ENCODE measurements at regions of chr11 and their contacts with region 1.

Region 1: GRCh38 chr11:2725368-2726300 is 25.8 kb upstream of the KCNQ1OT1 start:
- DNase-seq: peak; percentile 79
- ATAC-seq: peak; percentile 12
- H3K4me3 ChIP-seq: peak overlapping the region; percentile 27 to 60 (median 30); a peak in 5 of 6 replicates
- H3K27ac ChIP-seq: peak overlapping the region; percentile 64
- H3K4me1 ChIP-seq: peaks cover 93% of the 10 kb centered on the region
- H3K27me3 ChIP-seq: peaks cover 2 to 16% of the 10 kb centered on the region in 2 experiments; a peak in 3 of 5 replicates
- CTCF ChIP-seq: no peak
- EP300 ChIP-seq: no peak
- POLR2A ChIP-seq: peak in 1 of 2 experiments; percentile 38; a peak in 2 of 4 replicates
- RAD21 ChIP-seq: no peak

Region 2: DNA sequence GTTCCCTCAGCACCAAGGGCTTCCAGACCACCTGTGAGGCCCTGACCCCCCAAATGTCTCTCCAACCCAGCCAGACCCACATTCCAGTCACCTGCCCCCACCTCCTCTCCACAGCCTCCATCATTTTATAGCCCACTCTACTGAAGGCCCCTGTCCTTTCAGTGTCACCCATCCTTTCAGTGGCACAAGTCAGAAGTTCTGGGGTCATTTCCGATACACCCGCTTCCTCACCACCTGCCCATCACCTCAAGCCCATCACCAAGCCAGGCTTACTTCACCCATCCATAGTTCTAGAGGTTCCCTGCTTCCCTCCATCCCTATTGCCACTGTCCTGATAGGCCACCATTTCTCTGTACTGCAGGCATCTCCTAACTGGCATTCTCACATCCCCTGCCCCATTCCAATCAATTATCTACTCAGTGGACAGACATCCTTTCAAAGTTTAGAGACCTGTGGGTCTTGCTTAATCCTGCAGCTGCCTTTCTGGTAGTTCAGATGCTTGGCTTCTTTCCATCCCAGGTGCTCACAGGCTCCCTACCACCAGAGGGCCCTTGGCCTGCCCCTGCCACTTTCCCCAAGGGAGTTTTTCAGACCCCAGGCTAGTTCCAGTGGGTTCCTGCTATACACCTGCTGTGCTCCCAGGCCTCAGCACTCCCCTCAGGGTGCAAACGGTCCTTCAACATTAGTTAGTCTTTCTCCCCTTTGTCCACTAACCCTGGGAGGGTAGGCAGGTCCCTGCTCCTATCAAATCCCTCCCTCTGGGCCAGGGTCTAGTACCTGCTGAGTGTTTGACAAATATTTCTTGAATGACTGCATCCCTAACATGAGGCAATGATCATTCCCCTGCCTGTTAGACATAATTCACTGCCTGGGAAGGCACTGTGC is 33.4 kb before region 1 on chr11:
- CTCF ChIA-PET with region 1: no interaction called
- POLR2A ChIA-PET with region 1: interaction called, 201 read pairs
- in situ Hi-C with region 1: loop called (anchors 5 kb)
- intact Hi-C with region 1: no loop called
- DNase-seq: peak; percentile 46
- ATAC-seq: peak; percentile 13
- H3K4me3 ChIP-seq: peak overlapping the region in 2 of 3 experiments; percentile 16 to 95; a peak in 3 of 6 replicates
- H3K27ac ChIP-seq: peak overlapping the region; percentile 41
- H3K4me1 ChIP-seq: peaks cover 98% of the 10 kb centered on the region
- H3K27me3 ChIP-seq: no peaks in the 10 kb centered on the region
- CTCF ChIP-seq: peak; percentile 67
- EP300 ChIP-seq: no peak
- POLR2A ChIP-seq: no peak
- RAD21 ChIP-seq: peak; percentile 76; the same call in 1 of the 2 replicates

Region 3: GRCh38 chr11:2741377-2742131 is 15.9 kb after region 1 on chr11:
- CTCF ChIA-PET with region 1: no interaction called
- POLR2A ChIA-PET with region 1: interaction called, 90 read pairs
- in situ Hi-C with region 1: no loop called
- intact Hi-C with region 1: no loop called
- DNase-seq: no peak
- ATAC-seq: peak; percentile 61
- H3K4me3 ChIP-seq: peak overlapping the region; percentile 16 to 40 (median 24); a peak in 3 of 6 replicates
- H3K27ac ChIP-seq: no peak overlapping the region
- H3K4me1 ChIP-seq: peaks cover 60% of the 10 kb centered on the region
- H3K27me3 ChIP-seq: peaks cover 10 to 43% of the 10 kb centered on the region in 2 experiments; a peak in 4 of 5 replicates
- CTCF ChIP-seq: 0 out of 2 replicates have a peak, but pooled peaks have one; percentile 6
- EP300 ChIP-seq: no peak
- POLR2A ChIP-seq: no peak
- RAD21 ChIP-seq: no peak

Region 4: DNA sequence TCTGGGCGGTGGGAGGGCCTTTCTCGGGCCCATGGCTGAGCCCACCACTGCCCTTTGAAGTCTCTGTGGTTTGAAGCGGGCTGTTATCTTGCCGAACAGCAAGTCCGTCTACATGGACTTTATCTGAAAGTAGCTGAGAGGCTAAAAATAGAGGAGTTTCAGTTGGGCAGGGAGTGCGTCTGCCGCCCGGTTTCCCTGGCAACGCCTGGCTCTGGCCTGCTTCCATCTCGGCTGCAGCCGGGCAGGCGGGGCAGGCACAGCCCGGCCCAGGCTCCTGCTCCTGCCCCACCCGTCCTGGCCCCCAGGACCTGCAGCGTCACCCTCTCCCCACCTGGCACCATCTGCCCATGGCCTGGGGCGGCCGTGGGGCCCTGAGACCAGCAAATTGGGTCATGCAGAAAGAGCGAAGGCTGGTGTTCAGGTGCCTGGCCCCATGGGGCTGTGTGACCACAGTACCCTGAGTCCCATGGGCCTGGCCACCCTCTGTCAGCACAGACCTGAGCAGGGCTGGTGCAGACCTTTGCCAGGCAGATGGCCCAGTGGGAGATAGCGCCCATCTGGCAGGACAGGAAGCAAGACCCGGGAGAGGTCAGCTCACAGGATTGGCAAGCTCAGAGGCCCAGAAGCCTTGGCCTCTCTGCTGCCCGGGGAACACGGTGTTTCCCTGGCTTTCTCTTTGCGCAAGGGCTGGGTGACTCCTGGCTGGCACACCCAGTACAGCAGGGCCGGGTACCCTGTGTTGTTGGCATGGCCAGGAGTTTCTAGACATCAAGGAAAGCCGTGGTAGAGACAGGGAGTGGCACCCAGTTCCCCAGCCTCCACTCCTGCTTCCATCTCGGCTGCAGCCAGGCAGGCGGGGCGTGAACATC is 53.2 kb after region 1 on chr11:
- CTCF ChIA-PET with region 1: no interaction called
- POLR2A ChIA-PET with region 1: interaction called, 6 read pairs
- in situ Hi-C with region 1: no loop called
- intact Hi-C with region 1: loop called (anchors 5 kb)
- DNase-seq: peak; percentile 66
- ATAC-seq: peak; percentile 51
- H3K4me3 ChIP-seq: peak overlapping the region in 1 of 3 experiments; percentile 60; a peak in 2 of 6 replicates
- H3K27ac ChIP-seq: no peak overlapping the region
- H3K4me1 ChIP-seq: peaks cover 45% of the 10 kb centered on the region
- H3K27me3 ChIP-seq: peaks cover 12 to 83% of the 10 kb centered on the region in 2 experiments; a peak in 4 of 5 replicates
- CTCF ChIP-seq: no peak
- EP300 ChIP-seq: no peak
- POLR2A ChIP-seq: no peak
- RAD21 ChIP-seq: no peak

Region 5: GRCh38 chr11:2901854-2902783 is 176.5 kb after region 1 on chr11:
- CTCF ChIA-PET with region 1: no interaction called
- POLR2A ChIA-PET with region 1: interaction called, 21 read pairs
- in situ Hi-C with region 1: no loop called
- intact Hi-C with region 1: no loop called
- DNase-seq: peak; percentile 90
- ATAC-seq: peak; percentile 87
- H3K4me3 ChIP-seq: peak overlapping the region; percentile 76 to 92 (median 84)
- H3K27ac ChIP-seq: peak overlapping the region; percentile 78
- H3K4me1 ChIP-seq: peaks cover 28% of the 10 kb centered on the region
- H3K27me3 ChIP-seq: no peaks in the 10 kb centered on the region; a peak in 2 of 5 replicates
- CTCF ChIP-seq: no peak
- EP300 ChIP-seq: no peak
- POLR2A ChIP-seq: peak in 1 of 2 experiments; percentile 33; a peak in 1 of 4 replicates
- RAD21 ChIP-seq: peak; percentile 23; the same call in 1 of the 2 replicates